Cardiac septum (tissue), 1 donor: ENCODE measurements at regions of chr2 and their contacts with region 1.

Region 1: GRCh38 chr2:195656859-195657633 is at the start of gene SLC39A10:
- DNase-seq: peak; percentile 99
- total RNA-seq, gene SLC39A10: 21.5 TPM

Region 2: DNA sequence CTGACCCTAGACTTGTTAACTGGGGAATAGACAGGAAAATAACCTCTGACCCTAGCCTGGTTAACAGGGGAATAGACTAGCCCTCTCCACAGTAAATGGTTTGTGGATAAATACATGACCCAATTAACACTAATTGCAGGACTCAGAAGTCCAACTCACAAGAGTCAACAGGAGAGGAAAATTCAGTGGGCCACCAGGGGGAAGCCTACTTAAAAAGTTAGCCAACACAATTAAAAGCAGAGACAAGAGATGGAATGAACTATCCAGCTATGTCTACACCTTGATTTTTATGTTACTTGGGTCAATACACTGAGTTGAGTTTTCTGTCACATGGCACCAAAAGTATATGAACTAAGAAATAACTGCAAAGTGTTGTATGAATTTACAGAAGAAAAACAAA is 158.9 kb before region 1 on chr2:
- intact Hi-C with region 1: loop called (anchors 10 kb)
- DNase-seq: no peak

Region 3: GRCh38 chr2:195575879-195576401 is 81.1 kb before region 1 on chr2:
- intact Hi-C with region 1: loop called (anchors 1 kb)
- DNase-seq: no peak

Region 4: DNA sequence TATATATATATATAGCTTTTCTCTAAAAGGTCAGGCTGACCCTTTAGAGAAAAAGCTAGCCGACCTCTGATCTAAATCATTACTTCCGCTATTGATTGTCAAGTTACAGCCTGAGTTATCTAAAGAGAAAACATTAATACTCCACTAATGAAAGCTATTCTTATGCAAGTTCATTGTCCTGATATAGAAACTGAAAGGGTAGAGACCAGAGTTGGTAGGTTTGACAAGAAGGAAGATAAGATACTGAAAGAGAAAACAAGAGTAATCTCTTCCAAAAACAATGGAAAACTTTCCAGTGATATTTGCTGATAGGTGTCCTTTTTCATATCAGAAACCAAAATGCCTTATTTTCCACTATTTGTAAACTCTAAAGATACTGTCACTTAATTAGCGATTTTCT is 62.8 kb before region 1 on chr2:
- intact Hi-C with region 1: no loop called
- DNase-seq: no peak

Region 5: GRCh38 chr2:195613922-195614321 is 43.1 kb before region 1 on chr2:
- intact Hi-C with region 1: loop called (anchors 2 kb)
- DNase-seq: no peak

Region 6: DNA sequence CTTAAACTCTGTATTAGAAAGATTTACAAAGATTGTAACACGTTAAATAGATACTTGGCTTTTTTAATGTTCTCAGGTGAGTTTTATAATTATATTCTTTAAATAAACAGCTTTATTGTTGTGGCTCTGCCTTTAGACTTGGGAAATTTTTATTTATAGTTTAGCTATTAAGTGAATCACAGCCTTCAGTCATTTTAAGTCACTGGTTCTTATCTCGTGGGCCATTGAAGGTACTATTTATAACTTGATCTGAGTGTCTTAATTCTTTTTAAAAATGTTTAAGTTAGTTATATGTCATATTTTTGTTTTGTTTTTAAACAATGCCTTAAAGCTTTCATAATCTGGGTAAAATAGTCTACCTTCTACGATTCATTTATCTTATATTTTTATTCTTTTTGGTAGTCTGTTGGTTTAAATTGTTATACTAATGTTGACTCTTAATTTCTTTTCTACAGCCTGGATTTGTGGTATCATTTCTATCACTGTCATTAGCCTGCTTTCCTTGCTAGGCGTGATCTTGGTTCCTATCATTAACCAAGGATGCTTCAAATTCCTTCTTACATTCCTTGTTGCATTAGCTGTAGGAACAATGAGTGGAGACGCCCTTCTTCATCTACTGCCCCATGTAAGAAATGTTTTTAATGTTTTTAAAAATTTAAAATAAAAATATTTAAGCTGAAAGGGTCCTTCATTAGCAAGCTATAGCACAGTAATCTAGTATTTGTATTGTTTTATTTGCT is 49.3 kb after region 1 on chr2:
- intact Hi-C with region 1: no loop called
- DNase-seq: no peak

Region 7: GRCh38 chr2:195737173-195738043 is 80.4 kb after region 1 on chr2:
- intact Hi-C with region 1: no loop called
- DNase-seq: no peak

Region 8: DNA sequence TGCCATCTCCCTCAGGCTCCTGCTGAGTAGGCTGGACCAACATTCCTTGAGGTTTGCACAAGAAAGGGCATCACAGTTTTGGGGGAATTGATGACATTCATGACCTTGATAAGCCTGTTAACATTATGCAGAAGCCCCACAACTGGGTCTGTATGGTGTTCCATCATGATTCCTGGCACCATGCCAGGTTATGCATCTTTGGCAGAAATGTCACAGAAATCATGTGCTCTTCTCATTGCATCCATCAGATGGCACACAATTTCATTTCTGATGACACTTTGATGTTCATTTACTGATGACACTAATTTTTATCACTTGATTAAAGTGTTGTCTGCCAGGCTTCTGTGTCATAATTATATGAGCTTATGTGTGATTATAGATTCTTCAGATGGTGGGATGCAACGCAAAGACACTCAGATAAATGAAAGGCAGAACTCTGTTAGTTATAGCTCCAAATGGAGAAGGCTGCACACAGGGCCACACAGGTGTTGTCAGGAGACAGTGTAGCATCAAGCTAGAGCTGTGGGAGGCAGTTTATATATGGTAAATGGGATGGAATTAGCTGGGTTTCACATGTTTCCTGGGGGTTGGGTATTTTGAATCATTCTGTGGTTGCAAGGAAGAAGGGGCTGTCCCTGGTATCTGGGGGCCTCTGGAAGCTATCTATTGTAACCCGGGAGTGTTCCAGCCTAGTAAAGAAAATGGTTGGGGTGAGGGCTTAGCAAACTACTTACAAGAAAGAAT is 191.3 kb after region 1 on chr2:
- intact Hi-C with region 1: no loop called
- DNase-seq: no peak

Region 9: DNA sequence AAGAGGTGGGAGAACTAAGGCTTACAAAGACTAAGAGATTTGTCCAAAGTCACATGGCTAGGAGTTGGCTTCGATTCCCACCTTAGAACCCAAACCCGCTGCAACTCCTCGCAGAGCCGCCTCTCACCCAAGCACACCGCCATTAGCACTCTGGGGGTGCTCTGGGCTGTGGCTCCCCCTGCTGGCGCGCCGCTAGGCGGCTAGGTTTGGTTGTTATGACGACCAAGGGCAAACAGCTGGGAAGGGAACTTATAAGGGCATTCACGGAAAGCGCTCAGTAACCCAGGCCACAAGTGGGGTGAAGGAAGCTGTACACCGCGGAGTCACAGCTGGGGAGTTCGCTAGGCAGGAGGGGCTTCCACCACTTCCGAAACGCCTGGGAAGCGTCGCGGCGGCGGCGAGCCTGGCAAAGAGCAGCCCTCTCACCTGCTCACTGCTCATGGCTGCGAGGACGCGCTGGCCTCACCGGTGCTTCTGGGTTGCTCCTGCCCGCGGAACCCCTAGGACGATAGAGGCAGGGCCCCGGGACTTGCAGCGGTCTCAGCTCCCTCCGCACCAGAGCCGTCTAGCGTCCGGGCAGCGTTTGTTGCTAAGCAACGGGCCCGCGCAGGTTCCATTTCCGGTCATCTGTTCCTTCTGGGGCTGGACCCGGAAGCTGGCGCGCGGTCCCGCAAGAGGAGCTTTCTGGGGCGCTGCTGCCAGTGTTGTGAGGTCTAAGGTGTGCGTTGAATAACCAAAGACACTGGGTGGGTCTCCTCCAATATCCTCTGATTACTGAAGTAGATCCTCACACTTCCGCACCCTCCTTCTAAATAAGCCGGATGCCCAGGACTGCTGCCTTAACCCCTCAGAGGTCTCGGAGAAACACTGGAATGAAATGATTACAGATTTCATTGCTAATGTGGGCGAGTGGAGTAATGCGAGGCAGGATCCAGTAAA is 411.5 kb after region 1 on chr2 and contains the start of gene DNAH7:
- intact Hi-C with region 1: loop called (anchors 10 kb)
- DNase-seq: peak; percentile 96
- total RNA-seq, gene DNAH7: 0.32 TPM